ENCODE measurements at regions of chr11 and their contacts with region 1.

Region 1: GRCh38 chr11:2930704-2931428 is 1.6 kb upstream of the PHLDA2 start:
- H3K4me3 ChIP-seq: peak overlapping the region; percentile 2; the same call in 1 of the 2 replicates
- H3K27ac ChIP-seq: no peak overlapping the region
- H3K4me1 ChIP-seq: no peaks in the 10 kb centered on the region
- CTCF ChIP-seq: peak; percentile 78

Region 2: DNA sequence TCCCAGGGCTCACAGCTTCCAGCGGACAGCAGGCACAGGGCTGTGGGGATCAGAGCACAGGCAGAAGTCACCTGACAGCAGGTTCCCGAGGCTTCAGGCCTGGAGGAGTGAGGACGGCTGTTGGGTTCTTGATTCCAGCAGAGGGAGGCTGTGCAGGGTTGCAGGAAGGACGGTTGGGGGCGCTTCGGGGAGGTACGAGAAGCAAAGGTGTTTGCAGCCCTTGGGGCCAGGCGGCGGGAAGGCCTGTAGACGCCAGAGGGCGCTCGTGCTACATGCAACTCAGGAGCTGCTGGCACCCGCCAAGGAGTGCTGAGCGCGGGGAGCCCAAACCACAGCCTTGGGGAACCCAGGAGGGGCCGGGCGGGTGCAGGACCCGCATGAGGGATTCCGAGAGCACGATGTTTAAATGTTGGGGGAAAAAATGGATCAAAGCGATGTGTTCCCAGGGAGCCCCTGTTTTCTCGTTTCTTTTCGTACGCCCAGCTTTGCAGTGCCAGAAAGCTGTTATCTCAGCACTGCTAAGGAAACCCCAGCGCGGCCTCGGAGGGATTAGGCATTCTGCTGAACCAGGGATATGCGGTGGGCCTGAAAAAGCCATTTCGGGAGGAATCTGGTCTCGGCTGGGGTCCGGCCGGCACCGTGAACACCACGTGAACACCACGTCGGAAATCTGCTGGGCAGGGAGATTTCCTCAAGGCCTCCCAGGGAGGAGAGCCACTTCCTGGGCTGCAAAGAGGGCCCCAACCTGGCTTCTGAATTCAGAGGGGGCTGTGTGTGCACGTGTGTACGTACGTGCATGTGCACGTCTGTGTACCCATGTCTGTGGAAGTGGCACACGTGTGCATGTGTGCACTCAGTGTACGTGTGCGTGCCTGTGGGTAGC is 397.9 kb before region 1 on chr11:
- CTCF ChIA-PET with region 1: interaction called, 25 read pairs
- POLR2A ChIA-PET with region 1: interaction called, 14 read pairs
- H3K4me3 ChIP-seq: no peak overlapping the region
- H3K27ac ChIP-seq: no peak overlapping the region
- H3K4me1 ChIP-seq: no peaks in the 10 kb centered on the region
- CTCF ChIP-seq: peak; percentile 93

Region 3: DNA sequence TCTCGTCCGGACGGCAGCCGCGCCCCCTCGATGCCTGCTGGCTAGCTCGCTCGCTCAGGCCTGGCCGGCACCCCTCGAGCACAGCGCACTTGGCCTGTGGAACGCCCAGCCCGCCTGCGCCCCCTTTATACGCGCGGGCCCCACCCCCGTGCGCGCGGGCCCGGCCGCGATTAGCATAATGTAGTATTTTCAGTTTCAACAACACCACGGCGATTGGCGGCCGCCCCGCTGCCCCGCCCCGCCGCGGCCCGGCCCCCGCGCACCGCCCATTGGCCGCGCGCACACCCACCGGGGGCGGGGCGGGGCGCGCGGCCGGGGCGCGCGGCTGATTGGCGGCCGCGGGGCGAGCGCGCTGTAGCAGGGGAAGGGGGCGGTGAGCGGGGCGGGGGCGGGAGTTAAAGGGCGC is 45.2 kb before region 1 on chr11 and contains the start of gene CDKN1C:
- CTCF ChIA-PET with region 1: interaction called, 10 read pairs
- POLR2A ChIA-PET with region 1: interaction called, 10 read pairs
- H3K4me3 ChIP-seq: peak within 1 kb of the TSS; percentile 47
- H3K27ac ChIP-seq: no peak within 1 kb of the TSS
- H3K4me1 ChIP-seq: no peaks in the 10 kb centered on the region
- CTCF ChIP-seq: no peak

Region 4: DNA sequence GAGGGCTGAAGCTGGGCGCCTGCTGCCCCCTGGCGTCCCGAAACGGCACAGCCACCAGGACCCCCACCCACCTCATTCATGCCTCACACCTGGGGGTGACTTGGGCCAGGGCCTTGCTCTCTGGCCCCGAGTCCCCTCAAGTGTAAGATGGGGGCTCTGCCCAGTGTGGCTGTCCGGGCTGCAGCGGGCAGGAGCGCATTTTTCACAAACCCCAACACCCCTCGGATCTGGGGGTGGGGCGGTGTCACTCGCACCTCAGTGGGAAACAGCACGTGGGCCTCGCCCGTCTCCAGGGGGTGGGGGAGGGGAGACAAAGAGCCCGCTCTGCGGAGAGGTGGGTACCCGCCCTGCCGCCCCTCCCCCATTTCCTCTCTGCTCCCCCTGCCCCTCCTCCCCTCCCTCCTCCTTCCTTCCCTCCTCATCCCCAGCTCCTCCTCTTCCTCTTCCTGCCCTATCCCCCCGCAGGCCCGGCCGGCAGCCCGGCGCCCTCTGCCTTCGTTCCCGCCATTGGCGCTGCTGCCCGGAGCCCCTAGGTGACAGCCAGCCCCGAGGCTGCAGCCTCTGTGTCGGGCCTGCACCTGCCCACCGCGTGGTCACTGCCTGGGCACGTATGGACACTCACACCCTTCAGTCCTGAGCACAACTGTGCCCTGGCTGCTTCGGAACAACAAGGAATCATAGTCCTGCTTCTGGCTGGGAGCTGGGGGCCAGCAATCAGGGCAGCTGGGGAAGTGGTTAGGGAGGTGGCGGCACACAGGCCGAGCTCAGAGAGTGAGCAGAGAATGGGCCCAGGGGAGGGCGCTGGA is 38.4 kb before region 1 on chr11:
- CTCF ChIA-PET with region 1: interaction called, 10 read pairs
- POLR2A ChIA-PET with region 1: interaction called, 12 read pairs
- H3K4me3 ChIP-seq: no peak overlapping the region
- H3K27ac ChIP-seq: no peak overlapping the region
- H3K4me1 ChIP-seq: no peaks in the 10 kb centered on the region
- CTCF ChIP-seq: peak; percentile 71

Region 5: DNA sequence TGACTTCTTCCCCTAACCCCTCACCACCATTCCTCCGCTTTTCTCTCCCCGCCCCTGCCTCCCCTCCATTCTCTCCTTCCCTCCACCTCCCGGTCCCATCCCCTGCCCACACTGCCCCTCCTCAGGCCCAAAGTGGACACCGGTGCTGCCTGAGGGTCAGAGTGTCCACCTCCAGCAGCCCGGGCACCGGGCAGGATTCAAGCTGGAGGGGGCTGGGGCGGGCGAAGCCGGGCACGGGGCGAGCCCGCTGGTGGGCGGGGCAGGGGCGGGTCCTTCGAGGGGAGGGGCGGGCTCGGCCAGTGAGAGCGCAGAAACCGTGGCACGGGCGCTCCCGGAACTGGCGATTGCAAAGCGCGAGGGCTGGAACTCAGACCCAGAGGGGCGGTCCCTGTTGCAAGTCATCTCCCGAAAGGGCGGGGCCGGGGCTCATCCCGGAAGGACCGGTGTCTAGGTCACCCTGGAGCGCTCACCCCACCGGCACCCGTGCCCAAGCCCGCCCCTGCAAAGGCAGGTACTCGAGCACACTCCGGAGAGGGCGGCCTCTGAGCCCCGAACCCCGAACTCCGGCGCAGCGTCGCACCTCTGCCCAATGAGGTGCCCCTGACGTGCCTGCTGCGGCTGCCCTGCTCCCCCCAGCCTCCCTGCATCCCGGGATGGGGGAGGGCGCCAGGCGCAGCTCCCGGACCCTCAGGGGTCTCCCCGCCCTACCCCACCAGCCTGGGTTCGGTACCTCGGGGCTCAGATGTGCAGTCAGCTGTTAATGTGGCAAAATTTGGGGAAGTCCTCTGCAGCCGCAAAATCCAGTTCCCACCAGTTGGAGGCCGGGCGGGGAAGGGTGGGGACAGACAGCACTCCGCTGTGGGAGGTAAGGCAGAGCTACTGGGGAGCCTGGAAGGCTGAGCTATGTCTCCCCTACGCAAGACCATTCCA is 28.7 kb before region 1 on chr11:
- CTCF ChIA-PET with region 1: interaction called, 9 read pairs
- POLR2A ChIA-PET with region 1: interaction called, 11 read pairs
- H3K4me3 ChIP-seq: peak overlapping the region; percentile 57
- H3K27ac ChIP-seq: no peak overlapping the region
- H3K4me1 ChIP-seq: no peaks in the 10 kb centered on the region
- CTCF ChIP-seq: no peak

Region 6: DNA sequence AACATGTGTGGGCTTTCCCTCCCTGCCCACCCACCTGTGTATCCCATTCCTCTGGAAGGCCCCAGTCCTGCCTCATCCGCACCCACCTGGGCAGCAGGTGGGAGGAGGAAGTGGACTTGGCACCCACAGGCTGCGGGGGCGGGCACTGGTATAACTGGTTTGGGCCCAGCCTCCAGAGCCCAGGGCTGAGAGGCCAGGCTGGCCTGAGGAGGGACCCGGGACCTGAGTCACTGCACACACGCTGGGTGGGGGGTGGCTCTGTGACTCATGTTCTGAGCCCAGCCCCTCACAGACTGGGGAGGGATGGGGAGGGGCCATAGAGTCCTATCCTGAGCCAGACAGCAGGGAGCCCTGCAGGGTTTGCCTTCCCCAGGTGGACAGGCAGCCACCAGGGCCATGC is 18.4 kb before region 1 on chr11:
- CTCF ChIA-PET with region 1: interaction called, 7 read pairs
- POLR2A ChIA-PET with region 1: interaction called, 15 read pairs
- H3K4me3 ChIP-seq: no peak overlapping the region
- H3K27ac ChIP-seq: no peak overlapping the region
- H3K4me1 ChIP-seq: no peaks in the 10 kb centered on the region
- CTCF ChIP-seq: no peak

Region 7: DNA sequence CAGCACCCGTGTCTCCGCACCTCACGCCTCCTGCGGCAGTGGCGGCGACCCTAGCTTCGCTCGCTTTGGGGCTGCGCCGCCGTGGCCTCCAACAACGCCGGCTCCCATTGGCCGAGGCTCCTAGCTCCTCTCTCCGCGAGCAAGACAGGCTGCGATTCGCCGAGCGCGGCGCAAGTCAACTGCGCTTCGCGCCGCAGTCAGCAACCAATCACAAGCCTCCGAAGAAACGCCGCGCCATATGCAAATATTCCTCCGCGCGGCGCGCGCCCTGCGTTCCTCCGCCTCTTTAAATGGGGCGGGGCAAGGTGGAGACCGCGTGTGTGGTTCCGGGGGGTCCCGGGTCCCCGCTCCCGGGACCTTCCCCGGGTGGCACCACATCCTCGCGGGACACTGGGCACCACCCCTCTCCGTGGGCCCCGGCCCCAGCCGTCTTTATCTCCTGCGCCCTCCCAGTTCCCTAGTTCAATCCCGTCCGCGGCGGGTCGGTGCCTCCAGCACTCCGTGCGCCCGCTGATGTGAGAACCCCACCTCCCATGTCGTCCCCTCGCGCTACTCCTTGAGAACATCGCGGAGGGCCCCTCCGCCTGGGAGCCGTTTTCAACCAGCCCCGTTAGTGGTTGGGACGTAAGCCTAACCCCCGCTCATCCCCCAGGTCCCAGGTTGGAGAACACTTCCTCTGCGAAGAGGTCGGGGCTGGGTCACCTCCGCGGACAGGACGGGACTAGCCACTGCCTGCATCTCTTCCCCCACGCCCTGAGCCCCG is 61.5 kb after region 1 on chr11 and contains the start of gene NAP1L4:
- CTCF ChIA-PET with region 1: interaction called, 6 read pairs
- POLR2A ChIA-PET with region 1: interaction called, 22 read pairs
- H3K4me3 ChIP-seq: peak within 1 kb of the TSS; percentile 87
- H3K27ac ChIP-seq: peak within 1 kb of the TSS; percentile 67
- H3K4me1 ChIP-seq: no peaks in the 10 kb centered on the region
- CTCF ChIP-seq: 0 out of 2 replicates have a peak, but pooled peaks have one; percentile 21